Activated T-helper 2 cell treated with anti-CD3 and anti-CD28 coated beads, Interferon-gamma antibody, Interleukin-2, Interleukin-4, amounts not matched to agents 10 μg/mL and 5 μg/mL and 100 μg/mL, durations not matched to agents 14 hours and 24 hours and 36 hours (primary cell): ENCODE measurements at regions of chr1 and their contacts with region 1.

Region 1: DNA sequence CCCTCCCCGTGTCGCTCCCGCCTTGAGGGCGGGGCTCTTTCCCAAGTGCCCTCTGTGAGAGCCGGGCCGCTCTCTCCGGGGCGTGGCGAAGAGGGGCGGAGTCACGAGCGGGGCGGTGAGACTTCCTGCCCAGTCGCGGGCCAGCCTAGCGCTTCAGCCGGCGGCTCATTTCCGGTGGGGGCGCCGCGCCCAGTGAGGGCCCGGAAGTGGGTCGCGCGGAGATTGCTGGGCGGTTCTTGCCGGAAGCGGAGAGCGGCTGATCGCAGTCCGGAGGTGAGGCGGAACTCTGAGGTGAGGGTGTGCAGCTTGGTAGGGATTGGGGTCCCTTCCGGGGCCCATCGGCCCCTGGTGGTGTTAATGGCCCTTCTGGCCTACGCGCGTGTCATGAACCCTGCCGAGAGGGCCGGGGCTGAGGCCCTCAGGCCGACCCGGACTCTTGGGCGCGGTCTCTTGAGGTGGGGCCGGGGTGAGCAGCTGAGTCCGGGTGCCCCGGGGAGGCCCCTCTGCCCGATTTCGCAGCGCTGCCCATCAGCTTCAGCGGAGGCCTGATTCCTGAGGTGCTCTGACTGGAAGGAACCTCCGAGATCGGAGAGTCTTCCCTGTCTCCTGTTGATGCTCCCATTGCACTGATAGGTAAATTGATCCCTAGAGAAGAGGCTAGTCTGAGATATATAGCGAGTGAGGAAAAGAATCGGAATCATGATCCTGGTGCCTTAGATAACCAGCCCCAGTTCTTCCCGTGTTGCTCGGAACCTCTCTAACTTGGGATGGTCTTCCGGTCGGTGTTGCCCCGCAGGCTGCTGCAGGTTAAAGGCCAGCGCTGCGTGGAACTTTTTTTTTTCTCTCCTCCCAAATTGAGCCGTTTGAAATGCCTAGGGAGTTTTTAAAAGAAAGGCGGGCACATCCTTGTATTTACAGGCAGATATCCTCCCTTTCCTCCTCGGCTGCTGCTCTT is at the start of gene CAP1:
- DNase-seq: peak; percentile 100
- H3K4me3 Mint-ChIP-seq: peak within 1 kb of the TSS; percentile 94
- H3K27ac Mint-ChIP-seq: peak within 1 kb of the TSS; percentile 99
- H3K4me1 Mint-ChIP-seq: peaks cover 55% of the 10 kb centered on the region
- H3K27me3 Mint-ChIP-seq: no peaks in the 10 kb centered on the region
- total RNA-seq, gene CAP1: 512 and 520 TPM in 2 replicates

Region 2: GRCh38 chr1:39954816-39955546 is 85.8 kb before region 1 on chr1 and contains the start of gene MFSD2A:
- intact Hi-C with region 1: loop called (anchors 1 kb)
- DNase-seq: peak; percentile 81
- H3K4me3 Mint-ChIP-seq: peak within 1 kb of the TSS; percentile 95
- H3K27ac Mint-ChIP-seq: peak within 1 kb of the TSS; percentile 92
- H3K4me1 Mint-ChIP-seq: peaks cover 52% of the 10 kb centered on the region
- H3K27me3 Mint-ChIP-seq: peaks cover 7% of the 10 kb centered on the region
- total RNA-seq, gene MFSD2A: 43.3 and 47.8 TPM in 2 replicates

Region 3: GRCh38 chr1:40014812-40015594 is 25.8 kb before region 1 on chr1:
- intact Hi-C with region 1: loop called (anchors 2 kb)
- DNase-seq: no peak
- H3K4me3 Mint-ChIP-seq: no peak overlapping the region
- H3K27ac Mint-ChIP-seq: no peak overlapping the region
- H3K4me1 Mint-ChIP-seq: peaks cover 11% of the 10 kb centered on the region
- H3K27me3 Mint-ChIP-seq: peaks cover 10% of the 10 kb centered on the region

Region 4: DNA sequence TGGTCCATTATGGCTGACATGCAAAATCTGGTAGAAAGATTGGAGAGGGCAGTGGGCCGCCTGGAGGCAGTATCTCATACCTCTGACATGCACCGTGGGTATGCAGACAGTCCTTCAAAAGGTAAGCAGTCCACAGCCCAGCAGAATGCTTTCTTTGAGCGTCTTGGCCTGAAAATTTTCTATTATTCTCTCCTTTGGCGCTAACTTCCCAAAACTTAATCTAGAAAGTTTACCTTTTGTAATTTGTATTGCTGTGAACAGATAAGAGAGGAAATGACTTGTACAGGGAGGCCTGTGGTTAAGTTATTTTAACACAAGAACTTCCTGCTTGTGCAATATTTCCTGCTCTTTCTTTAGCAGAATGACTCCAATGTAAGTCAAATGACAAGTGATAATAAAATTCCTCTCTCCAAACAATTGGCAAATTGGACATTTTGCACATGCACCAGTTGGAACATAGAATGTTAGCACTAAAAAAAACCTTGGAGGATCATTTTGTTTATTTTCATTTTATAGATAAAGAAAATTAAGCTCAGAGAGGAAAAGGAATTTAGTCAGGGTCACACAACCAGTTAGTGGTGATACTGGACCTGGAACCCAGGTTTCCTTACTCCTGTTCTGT is 18.7 kb after region 1 on chr1:
- intact Hi-C with region 1: loop called (anchors 2 kb)
- DNase-seq: no peak
- H3K4me3 Mint-ChIP-seq: peak overlapping the region; percentile 61
- H3K27ac Mint-ChIP-seq: peak overlapping the region; percentile 69
- H3K4me1 Mint-ChIP-seq: peaks cover 88% of the 10 kb centered on the region
- H3K27me3 Mint-ChIP-seq: no peaks in the 10 kb centered on the region

Region 5: GRCh38 chr1:40257688-40258444 is 217.1 kb after region 1 on chr1 and contains the start of gene ZMPSTE24:
- intact Hi-C with region 1: loop called (anchors 1 kb)
- DNase-seq: peak; percentile 95
- H3K4me3 Mint-ChIP-seq: peak within 1 kb of the TSS; percentile 94
- H3K27ac Mint-ChIP-seq: peak within 1 kb of the TSS; percentile 98
- H3K4me1 Mint-ChIP-seq: peaks cover 38% of the 10 kb centered on the region
- H3K27me3 Mint-ChIP-seq: no peaks in the 10 kb centered on the region
- total RNA-seq, gene ZMPSTE24: 48.2 TPM in 2 replicates